IMR-90 (cell line): ENCODE measurements at regions of chr3 and their contacts with region 1.

Region 1: GRCh38 chr3:43162230-43163084 is 56.6 kb upstream of the POMGNT2 start:
- DNase-seq: peak; percentile 78
- ATAC-seq: peak; percentile 84
- H3K4me3 ChIP-seq: no peak overlapping the region
- H3K27ac ChIP-seq: no peak overlapping the region
- H3K4me1 ChIP-seq: peaks cover 2% of the 10 kb centered on the region; the same call in 1 of the 2 replicates
- H3K27me3 ChIP-seq: no peaks in the 10 kb centered on the region
- CTCF ChIP-seq: peak; percentile 62
- POLR2A ChIP-seq: no peak
- RAD21 ChIP-seq: peak; percentile 73

Region 2: GRCh38 chr3:43286115-43286840 is 123.8 kb after region 1 on chr3 and contains the start of gene SNRK:
- CTCF ChIA-PET with region 1: no interaction called
- POLR2A ChIA-PET with region 1: no interaction called
- dilution Hi-C with region 1: no loop called
- in situ Hi-C with region 1: no loop called
- intact Hi-C with region 1: loop called (anchors 10 kb)
- DNase-seq: peak; percentile 64
- ATAC-seq: peak; percentile 92
- H3K4me3 ChIP-seq: peak within 1 kb of the TSS; percentile 99
- H3K27ac ChIP-seq: peak within 1 kb of the TSS; percentile 51
- H3K4me1 ChIP-seq: peaks cover 11% of the 10 kb centered on the region
- H3K27me3 ChIP-seq: peaks cover 10% of the 10 kb centered on the region
- CTCF ChIP-seq: peak; percentile 26; the same call in 1 of the 2 replicates
- POLR2A ChIP-seq: peak; percentile 71
- RAD21 ChIP-seq: no peak
- total RNA-seq, gene SNRK: 20.6 and 23.1 TPM in 2 replicates

Region 3: GRCh38 chr3:43423142-43423541 is 260.7 kb after region 1 on chr3:
- CTCF ChIA-PET with region 1: no interaction called
- POLR2A ChIA-PET with region 1: no interaction called
- dilution Hi-C with region 1: no loop called
- in situ Hi-C with region 1: no loop called
- intact Hi-C with region 1: no loop called
- DNase-seq: peak; percentile 57
- ATAC-seq: peak; percentile 46; the same call in 1 of the 2 replicates
- H3K4me3 ChIP-seq: no peak overlapping the region
- H3K27ac ChIP-seq: no peak overlapping the region
- H3K4me1 ChIP-seq: peaks cover 3% of the 10 kb centered on the region; the same call in 1 of the 2 replicates
- H3K27me3 ChIP-seq: no peaks in the 10 kb centered on the region
- CTCF ChIP-seq: no peak
- POLR2A ChIP-seq: no peak
- RAD21 ChIP-seq: no peak

Region 4: GRCh38 chr3:43742920-43743319 is 580.5 kb after region 1 on chr3:
- CTCF ChIA-PET with region 1: no interaction called
- POLR2A ChIA-PET with region 1: no interaction called
- dilution Hi-C with region 1: no loop called
- in situ Hi-C with region 1: no loop called
- intact Hi-C with region 1: loop called (anchors 2 kb)
- DNase-seq: peak; percentile 62
- ATAC-seq: peak; percentile 48
- H3K4me3 ChIP-seq: no peak overlapping the region
- H3K27ac ChIP-seq: no peak overlapping the region
- H3K4me1 ChIP-seq: peaks cover 17% of the 10 kb centered on the region
- H3K27me3 ChIP-seq: no peaks in the 10 kb centered on the region
- CTCF ChIP-seq: peak; percentile 33
- POLR2A ChIP-seq: no peak
- RAD21 ChIP-seq: peak; percentile 42